Motor neuron (in vitro differentiated cells): ENCODE measurements at regions of chr15 and their contacts with region 1.

Region 1: DNA sequence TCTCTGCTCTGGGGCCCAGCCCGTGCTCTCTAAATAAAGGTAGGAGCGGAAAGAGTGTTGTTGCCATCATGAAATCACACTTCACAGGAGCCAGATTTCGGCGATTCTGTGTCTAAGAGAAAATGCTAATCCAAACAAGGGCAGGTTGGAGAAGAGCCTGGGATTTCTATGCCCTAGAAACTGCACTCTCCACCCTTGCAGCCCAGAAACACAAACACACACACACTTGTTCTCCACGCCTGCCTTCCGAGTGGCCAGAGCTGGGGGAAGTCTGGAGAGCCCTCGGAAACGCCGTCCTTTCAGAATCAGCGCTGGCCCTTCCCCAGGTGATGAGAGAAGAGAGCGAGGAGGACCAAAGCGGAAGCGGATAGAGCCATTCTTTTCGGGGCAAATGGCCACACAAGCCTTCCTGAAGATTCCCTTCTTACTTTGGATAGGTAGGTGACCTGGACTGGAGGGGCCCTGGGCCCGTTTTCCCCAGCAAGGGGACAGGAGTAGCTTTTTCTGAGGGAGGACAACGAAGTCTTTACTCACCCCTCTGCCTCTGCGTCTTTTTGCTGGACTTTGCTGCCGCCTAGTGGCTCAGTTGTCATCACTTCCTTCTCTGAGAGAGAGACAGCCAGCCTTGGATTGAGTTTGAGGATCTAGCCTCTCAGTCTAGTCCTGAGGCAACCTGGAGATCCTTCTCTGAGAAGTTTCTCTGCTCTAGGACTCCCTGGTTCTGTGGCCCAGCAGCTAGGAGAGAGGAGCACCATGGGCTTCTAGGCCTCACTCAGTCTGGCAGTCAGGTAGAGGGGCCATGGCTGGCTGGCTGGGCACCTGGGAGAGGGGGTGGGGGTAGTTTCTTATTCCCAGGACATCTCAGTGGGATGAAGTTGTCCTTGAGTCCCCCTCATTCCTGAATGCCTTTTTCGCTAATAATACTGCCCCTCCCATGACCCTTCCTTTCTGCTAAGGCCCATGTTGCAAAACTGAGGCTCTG is 37.7 kb downstream of the SENP8 start:
- ATAC-seq: peak; percentile 88 to 97 (median 96)
- H3K4me3 ChIP-seq: peak overlapping the region in 2 of 5 donors; percentile 9 to 20
- H3K27ac ChIP-seq: no peak overlapping the region
- H3K4me1 ChIP-seq: peaks cover 0 to 6% of the 10 kb centered on the region in 2 donors

Region 2: GRCh38 chr15:71471347-71471746 is 684.6 kb before region 1 on chr15:
- in situ Hi-C with region 1: loop called in 1 of 9 experiments (anchors 25 kb)
- ATAC-seq: peak in 2 of 8 experiments; percentile 23 to 36
- H3K4me3 ChIP-seq: no peak overlapping the region
- H3K27ac ChIP-seq: no peak overlapping the region
- H3K4me1 ChIP-seq: no peaks in the 10 kb centered on the region

Region 3: GRCh38 chr15:71730277-71731144 is 425.4 kb before region 1 on chr15:
- in situ Hi-C with region 1: loop called in 1 of 9 experiments (anchors 25 kb)
- ATAC-seq: peak; percentile 42 to 80 (median 64)
- H3K4me3 ChIP-seq: no peak overlapping the region
- H3K27ac ChIP-seq: no peak overlapping the region
- H3K4me1 ChIP-seq: no peaks in the 10 kb centered on the region

Region 4: GRCh38 chr15:71752604-71753289 is 403.2 kb before region 1 on chr15:
- in situ Hi-C with region 1: loop called in 2 of 9 experiments (anchors 25 kb)
- ATAC-seq: peak in 3 of 8 experiments; percentile 56 to 71 (median 59)
- H3K4me3 ChIP-seq: no peak overlapping the region
- H3K27ac ChIP-seq: no peak overlapping the region
- H3K4me1 ChIP-seq: no peaks in the 10 kb centered on the region

Region 5: GRCh38 chr15:71800835-71801745 is 354.8 kb before region 1 on chr15:
- in situ Hi-C with region 1: loop called in 1 of 9 experiments (anchors 25 kb)
- ATAC-seq: peak; percentile 61 to 91 (median 82)
- H3K4me3 ChIP-seq: no peak overlapping the region
- H3K27ac ChIP-seq: no peak overlapping the region
- H3K4me1 ChIP-seq: no peaks in the 10 kb centered on the region

Region 6: DNA sequence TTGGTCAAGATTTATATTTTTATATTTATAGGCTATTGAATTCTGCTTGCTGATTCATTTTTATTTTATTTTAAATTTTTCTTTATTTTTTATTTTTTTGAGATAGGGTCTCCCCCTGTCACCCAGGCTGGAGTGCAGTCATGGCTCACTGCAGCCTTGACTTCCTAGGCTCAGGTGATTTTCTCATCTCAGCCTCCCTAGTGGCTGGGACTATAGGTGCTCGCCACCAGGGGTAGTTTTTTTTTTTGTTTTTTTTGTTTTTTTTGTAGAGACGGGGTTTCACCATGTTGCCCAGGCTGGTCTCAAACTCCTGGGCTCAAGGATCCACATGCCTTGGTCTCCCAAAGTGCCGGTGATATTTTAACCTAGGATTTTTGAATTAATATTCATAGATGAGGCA is 314.4 kb before region 1 on chr15:
- in situ Hi-C with region 1: loop called in 1 of 9 experiments (anchors 25 kb)
- ATAC-seq: no peak
- H3K4me3 ChIP-seq: no peak overlapping the region
- H3K27ac ChIP-seq: no peak overlapping the region
- H3K4me1 ChIP-seq: no peaks in the 10 kb centered on the region